HCT116 (cell line): ENCODE measurements at regions of chr11 and their contacts with region 1.

Region 1: GRCh38 chr11:34585735-34586487 is 35.0 kb upstream of the EHF start:
- DNase-seq: peak; percentile 56
- ATAC-seq: peak; percentile 80
- H3K4me3 ChIP-seq: no peak overlapping the region
- H3K27ac ChIP-seq: 0 out of 2 replicates have a peak overlapping the region, but pooled peaks have one; percentile 2
- H3K4me1 ChIP-seq: peaks cover 7 to 41% of the 10 kb centered on the region in 2 experiments; a peak in 3 of 4 replicates
- H3K27me3 ChIP-seq: no peaks in the 10 kb centered on the region
- CTCF ChIP-seq: peak; percentile 49 to 94 (median 80)
- POLR2A ChIP-seq: no peak
- RAD21 ChIP-seq: peak; percentile 97

Region 2: GRCh38 chr11:34379079-34379478 is 206.8 kb before region 1 on chr11:
- CTCF ChIA-PET with region 1: no interaction called
- POLR2A ChIA-PET with region 1: no interaction called
- RAD21 ChIA-PET with region 1: no interaction called
- intact Hi-C with region 1: loop called (anchors 10 kb)
- DNase-seq: no peak
- ATAC-seq: peak; percentile 32; the same call in 1 of the 2 replicates
- H3K4me3 ChIP-seq: no peak overlapping the region
- H3K27ac ChIP-seq: no peak overlapping the region
- H3K4me1 ChIP-seq: peaks cover 0 to 7% of the 10 kb centered on the region in 2 experiments; a peak in 2 of 4 replicates
- H3K27me3 ChIP-seq: no peaks in the 10 kb centered on the region
- CTCF ChIP-seq: no peak
- POLR2A ChIP-seq: no peak
- RAD21 ChIP-seq: no peak

Region 3: GRCh38 chr11:34599406-34599901 is 13.5 kb after region 1 on chr11:
- CTCF ChIA-PET with region 1: interaction called, 11 read pairs
- POLR2A ChIA-PET with region 1: interaction called, 3 read pairs
- RAD21 ChIA-PET with region 1: interaction called in 1 of 2 experiments, 3 read pairs
- intact Hi-C with region 1: no loop called
- DNase-seq: peak; percentile 91
- ATAC-seq: peak; percentile 60
- H3K4me3 ChIP-seq: peak overlapping the region in 1 of 2 experiments; percentile 27; a peak in 1 of 4 replicates
- H3K27ac ChIP-seq: peak overlapping the region; percentile 92
- H3K4me1 ChIP-seq: peaks cover 51 to 63% of the 10 kb centered on the region in 2 experiments
- H3K27me3 ChIP-seq: no peaks in the 10 kb centered on the region
- CTCF ChIP-seq: no peak
- POLR2A ChIP-seq: no peak
- RAD21 ChIP-seq: peak; percentile 39

Region 4: DNA sequence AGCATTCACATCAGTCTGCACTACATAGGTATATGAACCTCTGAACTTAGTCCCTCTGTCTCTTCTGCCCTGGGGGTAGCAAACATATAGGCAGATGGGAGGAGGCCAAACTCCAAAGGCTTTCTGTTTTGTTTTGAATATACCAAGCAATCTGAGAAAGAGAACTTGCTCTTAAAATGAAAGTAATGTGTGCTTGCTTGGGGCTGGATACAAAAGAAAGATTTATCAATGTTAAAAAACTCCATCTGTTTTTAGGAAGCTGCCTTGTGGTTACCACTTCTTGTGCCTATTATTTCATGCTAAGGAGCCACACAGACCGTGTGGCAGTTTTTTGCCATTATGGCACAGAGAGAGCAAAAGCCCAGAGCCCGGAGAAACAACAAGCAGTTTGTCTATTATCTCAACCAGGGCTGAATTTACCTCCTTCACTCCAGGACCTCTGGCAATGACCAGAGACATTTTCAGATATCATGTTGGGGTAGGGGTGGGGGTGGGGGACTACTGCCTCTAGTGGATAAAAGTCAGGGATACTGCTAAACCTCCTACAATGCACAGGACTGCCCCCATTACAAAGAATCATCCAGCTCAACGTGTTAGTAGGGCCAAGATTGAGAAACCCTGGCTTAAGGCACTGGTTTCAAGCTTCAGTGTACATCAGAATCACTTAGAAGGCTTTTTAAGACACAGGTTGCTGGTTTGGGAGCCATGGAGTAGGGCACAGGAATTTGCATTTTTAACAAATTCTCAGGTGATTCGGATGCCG is 206.1 kb after region 1 on chr11:
- CTCF ChIA-PET with region 1: interaction called, 8 read pairs
- POLR2A ChIA-PET with region 1: no interaction called
- RAD21 ChIA-PET with region 1: interaction called in 1 of 2 experiments, 3 read pairs
- intact Hi-C with region 1: loop called (anchors 2 kb)
- DNase-seq: no peak
- ATAC-seq: peak; percentile 70
- H3K4me3 ChIP-seq: no peak overlapping the region
- H3K27ac ChIP-seq: no peak overlapping the region
- H3K4me1 ChIP-seq: peaks cover 0 to 18% of the 10 kb centered on the region in 2 experiments; a peak in 1 of 4 replicates
- H3K27me3 ChIP-seq: no peaks in the 10 kb centered on the region
- CTCF ChIP-seq: peak in 2 of 3 experiments; percentile 17 to 34; a peak in 2 of 6 replicates
- POLR2A ChIP-seq: no peak
- RAD21 ChIP-seq: no peak

Region 5: GRCh38 chr11:34899633-34900016 is 313.7 kb after region 1 on chr11:
- CTCF ChIA-PET with region 1: interaction called, 51 read pairs
- POLR2A ChIA-PET with region 1: no interaction called
- RAD21 ChIA-PET with region 1: interaction called in 1 of 2 experiments, 5 read pairs
- intact Hi-C with region 1: loop called (anchors 2 kb)
- DNase-seq: no peak
- ATAC-seq: peak; percentile 16; the same call in 1 of the 2 replicates
- H3K4me3 ChIP-seq: no peak overlapping the region
- H3K27ac ChIP-seq: no peak overlapping the region
- H3K4me1 ChIP-seq: peaks cover 3 to 5% of the 10 kb centered on the region in 2 experiments; a peak in 3 of 4 replicates
- H3K27me3 ChIP-seq: no peaks in the 10 kb centered on the region
- CTCF ChIP-seq: no peak
- POLR2A ChIP-seq: no peak
- RAD21 ChIP-seq: no peak